ENCODE measurements at regions of chrX and their contacts with region 1.

Region 1: GRCh38 chrX:51641421-51642021 is 22.8 kb upstream of the CENPVL3 start:
- DNase-seq: peak; percentile 54
- H3K4me3 ChIP-seq: peak overlapping the region in 1 of 2 experiments; percentile 17; a peak in 1 of 4 replicates
- H3K27ac ChIP-seq: no peak overlapping the region
- H3K4me1 ChIP-seq: no peaks in the 10 kb centered on the region
- H3K27me3 ChIP-seq: peaks cover 18% of the 10 kb centered on the region; the same call in 1 of the 2 replicates
- CTCF ChIP-seq: peak; percentile 78
- EP300 ChIP-seq: no peak
- RAD21 ChIP-seq: peak; percentile 89

Region 2: DNA sequence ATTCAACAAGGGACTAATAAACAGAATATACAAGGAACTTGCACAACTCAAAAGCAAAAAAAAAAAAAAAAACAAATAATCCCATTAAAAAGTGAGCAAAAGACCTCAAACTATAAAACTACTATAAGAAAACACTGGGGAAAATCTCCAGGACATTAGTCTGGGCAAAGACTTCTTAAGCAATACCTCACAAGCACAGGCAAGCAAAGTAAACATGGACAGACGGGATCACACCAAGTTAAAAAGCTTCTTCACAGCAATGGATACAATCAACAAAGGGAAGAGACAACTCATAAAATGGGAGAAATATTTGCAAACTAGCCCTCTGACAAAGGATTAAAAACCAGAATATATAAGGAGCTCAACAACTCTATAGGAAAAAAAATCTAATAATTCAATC is 748.1 kb before region 1 on chrX:
- CTCF ChIA-PET with region 1: no interaction called
- POLR2A ChIA-PET with region 1: no interaction called
- DNase-seq: no peak
- H3K4me3 ChIP-seq: no peak overlapping the region
- H3K27ac ChIP-seq: no peak overlapping the region
- H3K4me1 ChIP-seq: no peaks in the 10 kb centered on the region
- H3K27me3 ChIP-seq: no peaks in the 10 kb centered on the region; the same call in 1 of the 2 replicates
- CTCF ChIP-seq: no peak
- EP300 ChIP-seq: no peak
- RAD21 ChIP-seq: no peak

Region 3: DNA sequence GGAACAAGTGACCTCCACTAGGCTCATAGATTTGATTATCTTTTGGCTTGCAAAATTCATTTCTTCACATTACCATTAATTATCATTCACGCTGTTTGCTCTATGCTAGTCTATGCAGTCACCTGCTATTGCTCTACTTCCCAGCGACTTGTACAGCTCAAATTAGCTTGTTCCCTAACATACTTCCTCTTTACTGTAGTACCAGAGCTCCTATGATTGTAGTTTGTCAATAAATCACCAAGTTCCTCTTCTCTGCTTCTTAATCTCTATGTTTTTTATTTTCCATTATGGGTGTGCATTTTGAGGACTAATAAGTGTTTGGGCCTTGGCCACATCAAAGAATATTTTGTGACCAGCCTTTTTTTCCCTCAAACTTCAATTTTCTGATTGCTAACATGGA is 95.6 kb after region 1 on chrX:
- CTCF ChIA-PET with region 1: no interaction called
- POLR2A ChIA-PET with region 1: no interaction called
- DNase-seq: no peak
- H3K4me3 ChIP-seq: no peak overlapping the region
- H3K27ac ChIP-seq: no peak overlapping the region
- H3K4me1 ChIP-seq: no peaks in the 10 kb centered on the region
- H3K27me3 ChIP-seq: no peaks in the 10 kb centered on the region; the same call in 1 of the 2 replicates
- CTCF ChIP-seq: no peak
- EP300 ChIP-seq: no peak
- RAD21 ChIP-seq: no peak

Region 4: DNA sequence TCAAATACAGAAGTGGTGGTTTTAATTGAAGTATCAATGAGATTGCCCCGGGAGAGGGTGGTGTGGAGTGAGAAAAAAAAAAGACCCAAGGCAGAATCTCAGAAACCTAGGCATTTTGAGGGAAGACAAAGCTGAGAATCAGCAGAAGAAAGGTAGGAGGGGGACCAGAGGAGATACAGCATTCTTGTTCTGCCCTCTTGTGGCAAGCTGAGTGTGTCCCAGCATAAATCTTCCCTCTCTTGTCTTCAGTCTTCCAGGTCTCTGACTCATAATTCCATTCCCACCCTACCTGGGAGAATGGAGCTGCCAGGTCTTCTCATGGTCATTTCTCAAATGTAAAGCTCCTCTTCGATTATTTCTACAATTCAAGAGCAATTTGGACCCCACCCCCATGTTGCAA is 219.2 kb after region 1 on chrX:
- CTCF ChIA-PET with region 1: interaction called, 15 read pairs
- POLR2A ChIA-PET with region 1: no interaction called
- DNase-seq: peak; percentile 30
- H3K4me3 ChIP-seq: no peak overlapping the region
- H3K27ac ChIP-seq: no peak overlapping the region
- H3K4me1 ChIP-seq: no peaks in the 10 kb centered on the region
- H3K27me3 ChIP-seq: no peaks in the 10 kb centered on the region
- CTCF ChIP-seq: peak; percentile 65
- EP300 ChIP-seq: no peak
- RAD21 ChIP-seq: peak; percentile 74

Region 5: DNA sequence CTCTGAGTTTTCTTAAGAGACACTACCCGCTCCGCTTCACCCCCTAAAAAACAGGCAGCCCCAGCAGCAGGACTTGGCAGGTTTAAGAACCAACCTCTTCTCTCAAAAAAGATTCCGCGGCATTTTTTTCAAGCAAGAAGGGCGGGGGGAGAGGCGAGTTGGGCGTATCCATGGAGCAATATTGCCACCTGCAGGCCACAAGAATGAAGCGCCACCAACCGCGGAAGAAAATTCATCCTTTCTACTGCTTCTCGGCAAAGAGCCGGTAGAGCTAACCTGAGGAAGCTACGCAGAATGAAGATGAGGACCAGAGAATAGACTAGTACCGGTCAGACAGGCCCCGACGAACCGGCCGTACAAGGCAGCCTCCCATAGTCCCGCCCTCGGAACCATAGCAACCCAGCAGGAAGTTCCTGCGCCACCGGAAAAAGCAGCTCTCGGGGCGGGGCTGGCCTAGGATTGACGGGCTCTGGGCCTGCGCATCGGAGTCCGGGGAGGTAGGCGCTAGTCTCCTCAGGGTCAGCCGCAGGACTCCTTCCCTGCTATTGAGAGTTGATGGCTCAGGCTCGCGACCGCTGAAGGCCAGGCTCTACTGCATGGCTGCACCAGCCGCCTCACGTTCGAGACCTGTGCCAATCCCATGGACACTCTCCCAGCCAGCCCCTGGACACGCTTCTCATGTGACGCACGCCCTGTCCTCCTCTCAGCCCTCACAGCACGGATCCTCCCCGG is 620.1 kb after region 1 on chrX:
- CTCF ChIA-PET with region 1: interaction called, 11 read pairs
- POLR2A ChIA-PET with region 1: no interaction called
- DNase-seq: peak; percentile 87
- H3K4me3 ChIP-seq: peak overlapping the region; percentile 74 to 83
- H3K27ac ChIP-seq: peak overlapping the region; percentile 75 to 91
- H3K4me1 ChIP-seq: peaks cover 0 to 8% of the 10 kb centered on the region in 2 experiments; a peak in 2 of 4 replicates
- H3K27me3 ChIP-seq: peaks cover 4% of the 10 kb centered on the region; the same call in 1 of the 2 replicates
- CTCF ChIP-seq: peak; percentile 100
- EP300 ChIP-seq: peak; percentile 8 to 24; a peak in 2 of 4 replicates
- RAD21 ChIP-seq: peak; percentile 94

Region 6: GRCh38 chrX:52380993-52381392 is 739.5 kb after region 1 on chrX:
- CTCF ChIA-PET with region 1: no interaction called
- POLR2A ChIA-PET with region 1: no interaction called
- DNase-seq: no peak
- H3K4me3 ChIP-seq: no peak overlapping the region
- H3K27ac ChIP-seq: no peak overlapping the region
- H3K4me1 ChIP-seq: no peaks in the 10 kb centered on the region
- H3K27me3 ChIP-seq: no peaks in the 10 kb centered on the region; the same call in 1 of the 2 replicates
- CTCF ChIP-seq: no peak
- EP300 ChIP-seq: no peak
- RAD21 ChIP-seq: no peak

Measured in SK-N-SH (cell line).